WTC11 (cell line): ENCODE measurements at regions of chr3 and their contacts with region 1.

Region 1: GRCh38 chr3:127697551-127698240 is 24.9 kb downstream of the ABTB1 start:
- DNase-seq: peak; percentile 64
- ATAC-seq: peak; percentile 67
- H3K4me3 Mint-ChIP-seq: peak overlapping the region; percentile 39
- H3K27ac Mint-ChIP-seq: no peak overlapping the region
- H3K4me1 Mint-ChIP-seq: no peaks in the 10 kb centered on the region; the same call in 1 of the 2 replicates
- H3K27me3 Mint-ChIP-seq: no peaks in the 10 kb centered on the region
- CTCF ChIP-seq: no peak

Region 2: DNA sequence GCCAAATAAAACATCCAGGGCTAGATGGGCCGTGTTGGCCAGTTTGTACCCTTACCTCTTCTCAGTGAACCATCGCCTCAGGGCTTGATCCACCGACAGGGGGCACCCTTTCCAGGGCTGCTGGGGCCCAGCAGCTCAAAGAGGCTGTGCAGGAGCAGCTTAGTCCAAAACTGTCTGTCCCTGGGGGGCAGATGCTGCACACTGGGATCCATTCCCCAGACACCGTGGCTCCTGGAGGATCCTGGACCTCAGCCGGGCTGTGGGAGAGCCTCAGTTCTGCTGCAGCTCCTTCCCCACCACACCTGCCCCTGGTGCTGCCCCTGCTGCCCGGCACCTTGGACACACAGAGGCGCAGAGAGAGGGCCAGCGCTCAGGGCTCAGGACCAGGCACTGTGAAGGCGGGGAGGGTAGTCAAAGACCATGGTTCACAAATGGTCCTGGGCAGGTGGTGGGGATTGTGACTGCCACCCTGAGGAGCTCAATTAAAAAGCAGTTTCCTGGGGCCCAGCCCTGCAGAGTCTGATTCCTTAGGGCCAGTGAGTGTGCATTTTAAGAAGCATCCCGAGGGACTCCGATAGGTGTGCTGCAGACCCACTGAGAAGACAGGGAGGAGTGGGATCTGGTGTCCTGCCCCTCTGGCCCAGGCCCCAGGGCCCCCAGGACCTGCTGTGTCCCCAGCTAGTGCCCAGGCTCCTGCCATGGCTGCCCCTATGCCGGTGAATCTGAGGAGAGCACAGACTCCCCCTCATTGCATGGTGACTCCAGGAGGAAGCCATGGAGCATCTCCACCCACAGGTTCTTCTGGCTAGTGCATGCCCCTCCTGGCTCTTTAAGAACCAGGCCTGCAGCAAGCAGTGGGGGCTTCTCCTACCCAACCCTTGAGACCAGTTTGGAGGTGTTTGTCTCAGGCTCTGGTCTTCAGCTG is 323.3 kb before region 1 on chr3:
- CTCF ChIA-PET with region 1: no interaction called
- POLR2A ChIA-PET with region 1: no interaction called
- DNase-seq: peak; percentile 79
- ATAC-seq: peak; percentile 77
- H3K4me3 Mint-ChIP-seq: no peak overlapping the region
- H3K27ac Mint-ChIP-seq: no peak overlapping the region
- H3K4me1 Mint-ChIP-seq: peaks cover 5% of the 10 kb centered on the region; the same call in 1 of the 2 replicates
- H3K27me3 Mint-ChIP-seq: no peaks in the 10 kb centered on the region
- CTCF ChIP-seq: peak; percentile 60

Region 3: DNA sequence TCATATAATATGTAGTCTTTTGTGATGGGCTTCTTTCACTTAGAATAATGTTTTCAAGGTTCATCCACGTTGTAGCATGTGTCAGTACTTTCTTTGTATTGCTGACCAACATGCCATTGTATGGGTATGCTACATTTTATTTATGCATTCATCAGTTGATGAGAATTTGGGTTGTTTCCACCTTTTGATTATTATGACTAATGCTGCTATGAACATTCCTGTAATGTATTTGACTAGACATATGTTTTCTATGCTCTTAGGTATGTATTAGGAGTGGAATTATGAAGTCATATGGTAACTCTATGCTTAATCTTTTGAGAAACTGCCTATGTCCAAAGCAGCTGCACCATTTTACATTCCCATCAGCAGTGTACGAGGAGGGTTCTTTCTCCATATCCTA is 71.9 kb before region 1 on chr3:
- CTCF ChIA-PET with region 1: no interaction called
- POLR2A ChIA-PET with region 1: no interaction called
- DNase-seq: no peak
- ATAC-seq: no peak
- H3K4me3 Mint-ChIP-seq: no peak overlapping the region
- H3K27ac Mint-ChIP-seq: no peak overlapping the region
- H3K4me1 Mint-ChIP-seq: peaks cover 9% of the 10 kb centered on the region
- H3K27me3 Mint-ChIP-seq: peaks cover 48% of the 10 kb centered on the region
- CTCF ChIP-seq: no peak

Region 4: GRCh38 chr3:127710155-127710941 is 12.7 kb after region 1 on chr3:
- CTCF ChIA-PET with region 1: interaction called, 29 read pairs
- POLR2A ChIA-PET with region 1: interaction called, 3 read pairs
- DNase-seq: no peak
- ATAC-seq: no peak
- H3K4me3 Mint-ChIP-seq: no peak overlapping the region
- H3K27ac Mint-ChIP-seq: no peak overlapping the region
- H3K4me1 Mint-ChIP-seq: peaks cover 35% of the 10 kb centered on the region
- H3K27me3 Mint-ChIP-seq: no peaks in the 10 kb centered on the region; the same call in 1 of the 2 replicates
- CTCF ChIP-seq: no peak